ENCODE measurements at regions of chr2 and their contacts with region 1.

Region 1: DNA sequence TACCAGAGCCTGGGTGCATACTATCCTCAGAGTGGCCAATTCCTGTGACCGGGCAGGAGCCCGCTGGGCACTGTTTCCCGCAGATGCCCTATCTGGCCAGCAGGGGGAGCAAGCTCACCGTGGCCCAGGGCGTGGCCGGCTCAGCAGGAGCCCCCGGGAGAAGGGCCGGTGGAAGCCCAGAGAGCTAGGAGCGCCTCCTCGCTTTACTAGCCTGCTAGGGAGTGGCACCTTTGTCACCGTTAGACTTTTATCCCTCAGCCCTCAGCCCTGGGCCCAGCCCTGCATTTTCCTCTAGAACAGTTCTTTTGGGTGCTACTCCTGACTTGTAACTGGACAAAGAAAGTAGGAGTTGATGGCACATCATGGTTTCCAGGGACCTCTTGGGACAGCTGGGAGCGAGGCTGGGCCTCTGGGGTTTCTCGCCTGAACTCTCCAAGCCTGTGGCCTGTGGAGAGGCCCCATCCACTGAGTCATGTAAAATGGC is 24.0 kb downstream of the TMEM177 start:
- DNase-seq: peak; percentile 43
- ATAC-seq: peak; percentile 97
- H3K4me3 ChIP-seq: no peak overlapping the region
- H3K27ac ChIP-seq: no peak overlapping the region
- H3K4me1 ChIP-seq: no peaks in the 10 kb centered on the region
- H3K27me3 ChIP-seq: no peaks in the 10 kb centered on the region
- CTCF ChIP-seq: peak; percentile 99

Region 2: DNA sequence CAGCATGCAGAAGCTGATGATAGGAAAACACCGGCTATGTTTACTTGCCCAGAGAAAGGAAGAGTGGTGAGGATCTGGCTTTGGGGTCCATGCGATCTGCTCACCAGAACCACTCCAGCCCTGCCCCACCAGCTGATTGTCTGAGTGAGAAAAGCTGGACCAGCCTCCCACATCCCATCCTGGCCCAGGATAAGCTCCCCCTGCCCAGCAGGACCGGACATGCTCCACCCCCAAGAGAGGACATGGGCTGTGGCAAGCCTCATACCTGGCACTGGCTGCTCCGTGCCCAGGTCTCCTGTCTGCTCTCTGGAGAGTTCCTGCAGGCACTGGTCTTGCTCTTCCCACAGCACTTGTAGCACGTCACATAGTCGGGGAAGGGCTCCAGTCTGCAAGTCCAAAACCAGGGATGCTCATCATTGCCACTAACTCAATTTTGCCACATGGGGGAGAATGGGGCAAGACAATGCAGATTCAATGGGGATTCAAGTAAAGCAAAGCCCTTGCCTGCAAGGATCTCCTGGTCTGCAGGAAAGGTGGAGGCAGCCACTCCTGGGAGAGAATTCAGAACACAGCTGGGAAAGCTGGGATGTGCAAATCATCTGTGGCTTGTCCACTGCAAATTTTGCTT is 208.7 kb before region 1 on chr2:
- CTCF ChIA-PET with region 1: no interaction called
- POLR2A ChIA-PET with region 1: no interaction called
- in situ Hi-C with region 1: no loop called
- intact Hi-C with region 1: no loop called
- DNase-seq: no peak
- ATAC-seq: no peak
- H3K4me3 ChIP-seq: no peak overlapping the region
- H3K27ac ChIP-seq: no peak overlapping the region
- H3K4me1 ChIP-seq: peaks cover 12% of the 10 kb centered on the region
- H3K27me3 ChIP-seq: no peaks in the 10 kb centered on the region
- CTCF ChIP-seq: no peak

Region 3: DNA sequence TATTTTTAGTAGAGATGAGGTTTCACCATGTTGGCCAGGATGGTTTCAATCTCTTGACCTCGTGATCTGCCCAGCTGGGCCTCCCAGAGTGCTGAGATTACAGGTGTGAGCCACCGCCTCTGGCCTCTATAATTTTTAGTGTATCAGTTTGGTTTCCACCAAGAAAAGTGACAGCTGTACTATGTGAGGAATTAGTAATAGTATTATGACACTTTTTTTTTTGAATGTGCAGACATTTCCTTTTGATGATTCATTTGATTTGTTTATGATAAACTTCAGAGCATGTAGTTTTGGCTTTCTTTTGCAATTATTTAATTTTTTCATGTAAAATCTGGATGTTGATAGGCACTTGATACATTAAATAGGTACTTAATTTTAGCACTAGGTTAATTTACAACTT is 118.3 kb after region 1 on chr2:
- CTCF ChIA-PET with region 1: interaction called, 10 read pairs
- POLR2A ChIA-PET with region 1: no interaction called
- in situ Hi-C with region 1: no loop called
- intact Hi-C with region 1: loop called (anchors 5 kb)
- DNase-seq: no peak
- ATAC-seq: no peak
- H3K4me3 ChIP-seq: no peak overlapping the region
- H3K27ac ChIP-seq: no peak overlapping the region
- H3K4me1 ChIP-seq: 0 out of 2 replicates have a peak, but pooled peaks cover 3% of the 10 kb centered on the region
- H3K27me3 ChIP-seq: no peaks in the 10 kb centered on the region
- CTCF ChIP-seq: no peak

Region 4: DNA sequence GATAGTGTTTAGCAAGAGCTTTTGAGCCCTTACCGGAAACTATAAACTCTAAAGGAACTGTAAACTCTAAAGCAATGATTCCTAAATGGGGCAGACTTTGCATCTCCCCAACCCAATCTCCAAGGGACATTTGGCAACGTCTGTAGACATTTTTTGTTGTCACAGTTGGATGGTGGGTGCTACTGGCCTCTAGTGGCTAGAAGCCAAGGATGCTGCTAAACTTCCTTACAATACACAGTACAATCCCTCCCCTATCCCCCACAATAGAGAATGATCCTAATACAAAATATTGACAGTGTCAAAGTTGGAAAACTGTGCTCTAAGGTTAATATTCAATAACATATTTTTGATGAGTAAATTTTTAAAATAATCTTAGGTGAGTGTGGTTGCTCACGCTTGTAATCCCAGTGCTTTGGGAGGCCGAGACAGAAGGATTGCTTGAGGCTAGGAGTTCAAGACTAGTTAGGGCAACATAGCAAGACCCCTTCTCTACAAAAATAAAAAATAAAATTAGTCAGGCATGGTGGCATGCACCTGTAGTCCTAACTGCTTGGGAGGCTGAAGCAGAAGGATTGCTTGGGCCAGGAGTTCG is 123.5 kb after region 1 on chr2:
- CTCF ChIA-PET with region 1: interaction called, 10 read pairs
- POLR2A ChIA-PET with region 1: no interaction called
- in situ Hi-C with region 1: no loop called
- intact Hi-C with region 1: loop called (anchors 5 kb)
- DNase-seq: no peak
- ATAC-seq: peak; percentile 89
- H3K4me3 ChIP-seq: no peak overlapping the region
- H3K27ac ChIP-seq: no peak overlapping the region
- H3K4me1 ChIP-seq: peaks cover 3% of the 10 kb centered on the region; the same call in 1 of the 2 replicates
- H3K27me3 ChIP-seq: no peaks in the 10 kb centered on the region
- CTCF ChIP-seq: peak; percentile 79

Region 5: GRCh38 chr2:120174963-120175581 is 472.1 kb after region 1 on chr2:
- CTCF ChIA-PET with region 1: interaction called, 5 read pairs
- POLR2A ChIA-PET with region 1: no interaction called
- in situ Hi-C with region 1: no loop called
- intact Hi-C with region 1: loop called (anchors 2 kb)
- DNase-seq: peak; percentile 25
- ATAC-seq: 0 out of 2 replicates have a peak, but pooled peaks have one; percentile 67
- H3K4me3 ChIP-seq: no peak overlapping the region
- H3K27ac ChIP-seq: no peak overlapping the region
- H3K4me1 ChIP-seq: no peaks in the 10 kb centered on the region
- H3K27me3 ChIP-seq: no peaks in the 10 kb centered on the region
- CTCF ChIP-seq: peak; percentile 80

Region 6: GRCh38 chr2:120231974-120232635 is 529.1 kb after region 1 on chr2:
- CTCF ChIA-PET with region 1: interaction called, 18 read pairs
- POLR2A ChIA-PET with region 1: no interaction called
- in situ Hi-C with region 1: no loop called
- intact Hi-C with region 1: no loop called
- DNase-seq: no peak
- ATAC-seq: peak; percentile 36; the same call in 1 of the 2 replicates
- H3K4me3 ChIP-seq: peak overlapping the region; percentile 35 to 45
- H3K27ac ChIP-seq: peak overlapping the region; percentile 80
- H3K4me1 ChIP-seq: peaks cover 7% of the 10 kb centered on the region
- H3K27me3 ChIP-seq: no peaks in the 10 kb centered on the region
- CTCF ChIP-seq: no peak